Adrenal gland (tissue), 19 donors: ENCODE measurements at regions of chr19 and their contacts with region 1.

Region 1: DNA sequence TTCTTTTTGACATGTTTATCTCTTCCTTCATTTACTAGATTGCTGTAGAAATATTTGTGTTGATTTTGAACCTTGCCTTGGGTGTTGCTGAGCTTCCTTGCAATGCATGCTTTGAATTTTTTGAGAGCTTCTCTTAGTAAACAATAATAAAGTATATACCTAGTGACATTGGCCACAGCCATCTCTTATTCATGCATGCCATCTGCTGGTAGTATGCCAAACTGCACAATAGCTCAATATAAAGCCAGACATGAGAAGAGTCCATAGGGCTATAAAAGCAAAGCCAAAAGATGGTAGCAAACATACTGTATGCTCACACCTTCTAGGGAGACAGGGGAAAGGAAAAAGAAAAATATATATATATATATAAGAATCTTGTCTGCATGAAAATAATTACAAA is 18.9 kb upstream of the ZSCAN5A start:
- DNase-seq: peak in 6 of 7 donors; percentile 30 to 72 (median 50)
- H3K4me3 ChIP-seq: no peak overlapping the region
- H3K27ac ChIP-seq: no peak overlapping the region
- H3K4me1 ChIP-seq: no peaks in the 10 kb centered on the region
- H3K27me3 ChIP-seq: no peaks in the 10 kb centered on the region
- CTCF ChIP-seq: peak; percentile 27 to 72 (median 65)
- POLR2A ChIP-seq: no peak

Region 2: DNA sequence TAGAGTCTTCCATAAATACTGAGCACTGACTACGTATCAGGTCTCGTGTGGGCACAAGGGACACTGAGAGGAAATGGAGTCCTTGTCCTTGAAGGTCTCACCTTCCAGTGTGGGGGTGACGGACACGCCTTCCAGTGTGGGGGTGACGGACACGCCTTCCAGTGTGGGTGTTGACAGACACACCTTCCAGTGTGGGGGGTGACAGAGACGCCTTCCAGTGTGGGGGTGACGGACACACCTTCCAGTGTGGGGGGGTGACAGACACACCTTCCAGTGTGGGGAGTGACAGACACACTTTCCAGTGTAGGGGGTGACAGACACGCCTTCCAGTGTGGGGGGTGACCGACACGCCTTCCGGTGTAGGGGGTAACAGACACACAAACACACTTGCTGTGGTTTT is 75.2 kb before region 1 on chr19:
- intact Hi-C with region 1: loop called in 1 of 2 experiments (anchors 5 kb)
- DNase-seq: no peak
- H3K4me3 ChIP-seq: no peak overlapping the region
- H3K27ac ChIP-seq: no peak overlapping the region
- H3K4me1 ChIP-seq: no peaks in the 10 kb centered on the region
- H3K27me3 ChIP-seq: no peaks in the 10 kb centered on the region
- CTCF ChIP-seq: no peak
- POLR2A ChIP-seq: no peak